Spleen (tissue), 13 donors: ENCODE measurements at regions of chr15 and their contacts with region 1.

Region 1: GRCh38 chr15:90071208-90071807 is 31.0 kb downstream of the IDH2 start:
- DNase-seq: peak; percentile 92
- H3K4me3 ChIP-seq: no peak overlapping the region
- H3K27ac ChIP-seq: peak overlapping the region in 5 of 8 donors; percentile 34 to 64 (median 52)
- H3K4me1 ChIP-seq: peaks cover 3 to 48% (median 25%) of the 10 kb centered on the region in 6 donors
- H3K27me3 ChIP-seq: no peaks in the 10 kb centered on the region
- CTCF ChIP-seq: peak; percentile 61 to 92 (median 85)
- POLR2A ChIP-seq: no peak

Region 2: DNA sequence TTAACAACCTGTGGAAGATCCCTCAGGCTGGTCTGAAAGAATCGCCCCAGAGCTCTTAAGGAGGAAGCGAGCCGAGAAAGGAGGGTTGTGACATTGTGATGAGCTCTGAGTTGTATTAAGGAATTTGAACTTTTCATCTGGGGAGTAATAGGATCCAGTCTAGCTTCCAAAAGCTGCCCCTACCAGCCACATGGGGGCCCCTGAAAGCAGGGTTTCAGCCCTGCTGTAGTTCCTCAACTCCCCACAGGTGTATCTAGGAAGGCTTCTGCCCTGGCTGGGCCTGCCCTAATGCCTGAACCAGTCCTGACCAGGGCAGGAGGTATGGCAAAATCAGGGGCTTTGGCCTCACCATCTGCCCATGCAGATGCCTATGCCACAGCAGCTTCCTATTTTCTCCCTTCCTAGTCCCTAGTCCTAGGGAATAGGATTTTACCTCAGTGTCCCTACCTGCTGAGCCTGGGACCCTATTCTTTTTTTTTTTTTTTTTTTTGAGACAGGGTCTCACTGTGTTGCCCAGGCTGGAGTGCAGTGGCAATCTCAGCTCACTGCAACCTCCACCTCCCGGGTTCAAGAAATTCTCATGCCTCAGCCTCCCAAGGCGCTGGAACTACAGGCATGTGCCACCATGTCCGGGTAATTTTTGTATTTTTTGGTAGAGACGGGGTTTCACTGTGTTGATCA is 172.6 kb before region 1 on chr15:
- intact Hi-C with region 1: loop called (anchors 5 kb)
- DNase-seq: no peak
- H3K4me3 ChIP-seq: no peak overlapping the region
- H3K27ac ChIP-seq: no peak overlapping the region
- H3K4me1 ChIP-seq: peaks cover 0 to 20% (median 5%) of the 10 kb centered on the region in 6 donors
- H3K27me3 ChIP-seq: no peaks in the 10 kb centered on the region
- CTCF ChIP-seq: peak in 10 of 11 experiments; percentile 18 to 70 (median 60)
- POLR2A ChIP-seq: no peak